ENCODE measurements at regions of chr13 and their contacts with region 1.

Region 1: DNA sequence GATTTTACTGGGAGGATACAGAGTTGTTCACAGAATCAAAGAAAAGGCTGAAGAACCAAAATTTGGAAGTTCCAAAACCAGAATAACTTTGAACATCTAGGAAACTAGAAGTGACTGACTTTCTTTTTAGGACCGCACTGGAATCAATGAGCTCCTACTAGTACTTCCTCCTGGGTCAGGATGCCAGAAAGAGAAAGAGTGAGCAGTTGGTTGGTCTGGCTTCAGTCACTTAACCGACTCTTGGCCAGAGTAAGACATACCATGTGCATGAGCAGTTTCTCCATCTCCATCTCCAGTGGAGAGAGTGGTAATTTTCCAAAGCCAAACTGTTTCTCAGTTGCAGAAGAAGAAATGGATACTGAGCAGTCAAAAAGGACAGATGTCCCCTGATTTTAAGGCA is 27.1 kb upstream of the MTUS2 start:
- DNase-seq: no peak
- ATAC-seq: no peak
- H3K4me3 ChIP-seq: no peak overlapping the region
- H3K27ac ChIP-seq: no peak overlapping the region
- H3K4me1 ChIP-seq: no peaks in the 10 kb centered on the region
- H3K27me3 ChIP-seq: peaks cover 0 to 6% (median 5%) of the 10 kb centered on the region in 3 donors
- CTCF ChIP-seq: no peak
- POLR2A ChIP-seq: no peak

Region 2: GRCh38 chr13:28318496-28318895 is 474.5 kb before region 1 on chr13:
- in situ Hi-C with region 1: loop called in 3 of 4 experiments (anchors 5 to 25 kb)
- intact Hi-C with region 1: loop called (anchors 5 kb)
- DNase-seq: no peak
- ATAC-seq: no peak
- H3K4me3 ChIP-seq: no peak overlapping the region
- H3K27ac ChIP-seq: no peak overlapping the region
- H3K4me1 ChIP-seq: no peaks in the 10 kb centered on the region
- H3K27me3 ChIP-seq: no peaks in the 10 kb centered on the region
- CTCF ChIP-seq: no peak
- POLR2A ChIP-seq: no peak

Region 3: GRCh38 chr13:28324181-28324789 is 468.7 kb before region 1 on chr13:
- in situ Hi-C with region 1: loop called (anchors 5 to 25 kb)
- intact Hi-C with region 1: loop called (anchors 5 kb)
- DNase-seq: peak in 1 of 2 donors; percentile 11
- ATAC-seq: peak; percentile 39 to 46
- H3K4me3 ChIP-seq: no peak overlapping the region
- H3K27ac ChIP-seq: peak overlapping the region; percentile 33 to 73 (median 58)
- H3K4me1 ChIP-seq: peaks cover 0 to 4% of the 10 kb centered on the region in 2 donors
- H3K27me3 ChIP-seq: no peaks in the 10 kb centered on the region
- CTCF ChIP-seq: peak; percentile 39 to 67 (median 53)
- POLR2A ChIP-seq: no peak

Region 4: GRCh38 chr13:28329395-28330158 is 463.4 kb before region 1 on chr13:
- in situ Hi-C with region 1: loop called (anchors 5 to 25 kb)
- intact Hi-C with region 1: no loop called
- DNase-seq: no peak
- ATAC-seq: no peak
- H3K4me3 ChIP-seq: no peak overlapping the region
- H3K27ac ChIP-seq: no peak overlapping the region
- H3K4me1 ChIP-seq: peaks cover 0 to 4% of the 10 kb centered on the region in 2 donors
- H3K27me3 ChIP-seq: no peaks in the 10 kb centered on the region
- CTCF ChIP-seq: no peak
- POLR2A ChIP-seq: no peak

Region 5: DNA sequence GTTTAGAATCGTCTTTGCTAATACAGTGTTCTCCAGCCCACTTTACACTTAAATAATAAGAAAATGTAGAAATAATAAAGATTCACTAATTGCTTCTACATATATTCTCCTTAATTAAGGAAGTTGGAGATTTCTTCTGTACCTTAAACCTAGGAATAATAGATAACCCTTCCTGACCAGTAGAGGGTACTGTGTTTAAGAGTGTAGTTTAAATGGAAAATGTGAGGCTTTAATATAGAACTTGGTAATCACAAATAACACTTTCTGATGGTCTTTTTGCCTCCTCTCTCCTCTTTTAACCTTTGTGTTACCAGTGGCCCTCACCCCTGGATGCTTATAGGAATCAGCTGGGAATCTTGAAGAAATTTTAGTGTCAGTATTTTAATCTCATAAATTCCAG is 113.4 kb before region 1 on chr13:
- in situ Hi-C with region 1: no loop called
- intact Hi-C with region 1: loop called (anchors 2 kb)
- DNase-seq: no peak
- ATAC-seq: no peak
- H3K4me3 ChIP-seq: no peak overlapping the region
- H3K27ac ChIP-seq: no peak overlapping the region
- H3K4me1 ChIP-seq: no peaks in the 10 kb centered on the region
- H3K27me3 ChIP-seq: no peaks in the 10 kb centered on the region
- CTCF ChIP-seq: peak in 1 of 5 experiments; percentile 15
- POLR2A ChIP-seq: no peak